ENCODE measurements at regions of chr15 and their contacts with region 1.

Region 1: GRCh38 chr15:62306851-62307504 is 141.9 kb upstream of the C2CD4B start:
- DNase-seq: peak; percentile 37 to 42
- ATAC-seq: peak; percentile 87 to 88
- H3K4me3 ChIP-seq: no peak overlapping the region
- H3K27ac ChIP-seq: no peak overlapping the region
- H3K4me1 ChIP-seq: peaks cover 0 to 8% of the 10 kb centered on the region in 2 donors
- H3K27me3 ChIP-seq: no peaks in the 10 kb centered on the region
- CTCF ChIP-seq: peak; percentile 43 to 65 (median 54)
- POLR2A ChIP-seq: no peak

Region 2: DNA sequence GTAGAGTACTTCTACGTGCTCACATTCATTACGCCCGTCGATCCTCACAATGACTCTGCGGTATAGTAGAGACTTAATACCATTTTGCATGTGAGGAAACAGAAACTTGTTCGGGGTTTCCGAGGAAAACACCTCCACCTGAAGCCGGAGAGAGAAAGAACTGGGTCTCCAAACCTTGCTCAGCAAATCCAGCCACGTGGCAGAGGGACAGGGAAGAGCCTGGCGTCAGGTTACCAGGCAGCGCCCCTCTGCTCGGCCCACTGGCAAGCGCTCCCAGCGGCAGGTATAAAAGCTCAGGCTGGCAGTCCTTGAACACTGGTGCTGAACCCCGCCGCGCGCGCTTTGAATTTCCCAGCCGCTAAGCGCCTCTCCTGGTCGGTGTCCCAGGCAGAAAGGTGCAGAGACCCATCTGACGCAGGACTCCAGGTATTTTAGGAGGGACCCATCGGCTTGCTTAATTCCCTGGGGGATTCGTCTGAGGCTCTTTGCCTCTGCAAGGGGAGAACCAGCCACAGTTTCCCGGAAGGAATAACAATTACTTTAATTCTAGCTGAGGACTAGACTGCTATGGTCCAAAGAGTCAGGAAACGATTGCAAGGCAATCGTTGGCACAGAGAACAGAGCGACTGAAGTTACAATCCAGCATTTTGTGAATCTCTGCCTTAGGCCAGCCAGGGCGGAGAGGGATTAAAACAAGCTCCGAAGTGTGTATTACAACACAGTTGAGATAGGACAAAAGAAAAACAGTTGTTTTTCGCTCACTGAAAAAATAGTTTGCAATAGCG is 240.1 kb before region 1 on chr15 and contains the start of gene C2CD4A:
- in situ Hi-C with region 1: no loop called
- intact Hi-C with region 1: loop called (anchors 5 kb)
- DNase-seq: peak; percentile 30 to 55
- ATAC-seq: peak; percentile 56 to 73
- H3K4me3 ChIP-seq: peak within 1 kb of the TSS; percentile 50 to 70 (median 62)
- H3K27ac ChIP-seq: peak within 1 kb of the TSS in 3 of 4 donors; percentile 14 to 32 (median 24)
- H3K4me1 ChIP-seq: peaks cover 9 to 12% of the 10 kb centered on the region in 2 donors
- H3K27me3 ChIP-seq: no peaks in the 10 kb centered on the region
- CTCF ChIP-seq: peak in 2 of 5 experiments; percentile 33 to 36
- POLR2A ChIP-seq: peak in 1 of 2 donors; percentile 26
- total RNA-seq, gene C2CD4A: 0.23 to 0.66 (median 0.47) TPM in 3 of 4 donors, not detected in the other

Region 3: GRCh38 chr15:62344806-62345539 is 38.0 kb after region 1 on chr15:
- in situ Hi-C with region 1: no loop called
- intact Hi-C with region 1: no loop called
- DNase-seq: no peak
- ATAC-seq: no peak
- H3K4me3 ChIP-seq: no peak overlapping the region
- H3K27ac ChIP-seq: no peak overlapping the region
- H3K4me1 ChIP-seq: no peaks in the 10 kb centered on the region
- H3K27me3 ChIP-seq: no peaks in the 10 kb centered on the region
- CTCF ChIP-seq: peak in 3 of 5 experiments; percentile 10 to 39 (median 36)
- POLR2A ChIP-seq: no peak

Region 4: DNA sequence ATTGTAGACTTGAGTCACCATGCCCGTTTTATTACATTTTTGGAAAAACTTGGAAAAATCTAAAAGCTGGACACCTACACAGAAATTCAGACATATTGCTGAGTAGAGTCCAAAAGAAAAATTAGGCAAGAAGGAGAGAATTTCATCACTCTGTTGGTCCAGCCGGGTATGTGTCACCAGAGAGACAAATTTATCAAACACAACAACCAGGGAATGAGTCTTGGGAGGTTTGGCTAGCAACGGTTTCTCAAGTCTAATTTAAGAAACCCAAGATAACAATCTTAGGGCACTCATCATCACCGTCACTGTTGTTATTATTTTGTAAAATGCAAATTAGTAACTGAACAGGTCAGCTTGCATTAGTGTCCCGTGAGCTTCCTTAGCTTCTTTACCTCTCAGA is 55.6 kb after region 1 on chr15:
- in situ Hi-C with region 1: no loop called
- intact Hi-C with region 1: no loop called
- DNase-seq: no peak
- ATAC-seq: no peak
- H3K4me3 ChIP-seq: no peak overlapping the region
- H3K27ac ChIP-seq: no peak overlapping the region
- H3K4me1 ChIP-seq: no peaks in the 10 kb centered on the region
- H3K27me3 ChIP-seq: peaks cover 0 to 15% (median 0%) of the 10 kb centered on the region in 3 donors
- CTCF ChIP-seq: no peak
- POLR2A ChIP-seq: no peak

Measured in gastrocnemius medialis (tissue), 4 donors.